MCF 10A (cell line): ENCODE measurements at regions of chr18 and their contacts with region 1.

Region 1: DNA sequence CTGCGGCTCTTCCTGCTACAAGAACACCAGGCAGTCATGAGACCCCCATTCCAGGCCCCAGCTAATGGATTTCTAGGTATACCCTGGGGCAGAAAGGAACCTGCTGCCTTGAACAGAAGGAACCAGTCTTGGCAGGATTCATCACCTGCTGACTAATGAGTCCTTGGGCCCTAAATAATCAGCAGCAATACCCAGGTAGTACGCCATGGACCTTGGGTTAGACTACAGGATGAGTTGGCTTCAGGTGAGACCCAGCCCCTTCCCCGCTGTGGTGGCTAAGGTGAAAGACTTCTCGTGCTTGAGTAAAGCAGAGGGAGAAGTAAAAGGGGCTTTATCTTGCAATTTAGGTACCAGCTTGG is 105.0 kb downstream of the SPIRE1 start:
- DNase-seq: peak; percentile 88
- H3K4me3 Mint-ChIP-seq: peak overlapping the region; percentile 12
- H3K27ac Mint-ChIP-seq: peak overlapping the region; percentile 89
- H3K4me1 Mint-ChIP-seq: peaks cover 40% of the 10 kb centered on the region
- H3K27me3 Mint-ChIP-seq: no peaks in the 10 kb centered on the region
- CTCF ChIP-seq: no peak

Region 2: GRCh38 chr18:12384261-12384660 is 168.6 kb before region 1 on chr18:
- CTCF ChIA-PET with region 1: no interaction called
- POLR2A ChIA-PET with region 1: no interaction called
- intact Hi-C with region 1: no loop called
- DNase-seq: no peak
- H3K4me3 Mint-ChIP-seq: no peak overlapping the region
- H3K27ac Mint-ChIP-seq: no peak overlapping the region
- H3K4me1 Mint-ChIP-seq: peaks cover 6% of the 10 kb centered on the region
- H3K27me3 Mint-ChIP-seq: no peaks in the 10 kb centered on the region
- CTCF ChIP-seq: no peak

Region 3: DNA sequence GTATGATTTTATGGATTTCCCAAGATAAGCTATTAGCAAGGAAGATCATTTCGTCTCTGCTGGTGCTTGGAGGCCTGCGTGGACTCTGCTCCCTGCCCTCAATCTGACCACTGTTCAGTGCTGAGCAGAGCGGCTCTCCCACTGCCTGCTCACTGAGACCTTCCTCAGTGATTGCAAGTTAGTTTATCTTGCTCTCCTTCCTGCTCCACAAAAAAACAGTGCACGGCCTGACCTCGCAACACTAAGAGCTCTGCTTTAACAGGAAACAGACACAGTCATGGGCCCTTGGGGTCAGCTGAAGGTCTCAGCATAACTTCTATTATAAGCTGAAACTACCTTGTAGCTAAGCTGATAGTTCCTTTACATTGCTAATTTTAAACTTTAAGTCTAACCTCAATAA is 92.0 kb before region 1 on chr18:
- CTCF ChIA-PET with region 1: no interaction called
- POLR2A ChIA-PET with region 1: no interaction called
- intact Hi-C with region 1: no loop called
- DNase-seq: no peak
- H3K4me3 Mint-ChIP-seq: no peak overlapping the region
- H3K27ac Mint-ChIP-seq: no peak overlapping the region
- H3K4me1 Mint-ChIP-seq: no peaks in the 10 kb centered on the region
- H3K27me3 Mint-ChIP-seq: no peaks in the 10 kb centered on the region
- CTCF ChIP-seq: no peak

Region 4: GRCh38 chr18:12585218-12585617 is 32.4 kb after region 1 on chr18:
- CTCF ChIA-PET with region 1: interaction called, 3 read pairs
- POLR2A ChIA-PET with region 1: interaction called, 16 read pairs
- intact Hi-C with region 1: no loop called
- DNase-seq: peak; percentile 19
- H3K4me3 Mint-ChIP-seq: no peak overlapping the region
- H3K27ac Mint-ChIP-seq: no peak overlapping the region
- H3K4me1 Mint-ChIP-seq: peaks cover 22% of the 10 kb centered on the region
- H3K27me3 Mint-ChIP-seq: no peaks in the 10 kb centered on the region
- CTCF ChIP-seq: no peak

Region 5: DNA sequence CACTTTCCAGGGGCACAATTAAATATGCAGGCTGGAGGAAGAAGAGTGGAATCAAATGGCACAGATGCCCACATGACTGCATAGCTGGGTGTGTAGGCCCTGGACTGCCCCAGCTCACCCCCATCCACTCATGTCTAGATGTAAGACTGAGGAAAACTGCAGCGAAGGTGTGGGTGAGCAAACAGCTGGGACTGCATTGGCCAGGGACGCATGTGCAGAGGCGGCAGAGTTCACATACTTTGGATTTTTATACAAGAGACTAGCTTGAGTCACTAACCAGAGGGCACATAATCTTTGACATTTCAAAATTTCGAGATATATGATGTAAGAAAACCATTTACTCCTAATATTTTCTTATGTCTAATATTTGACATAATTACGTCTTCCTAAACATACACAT is 44.9 kb after region 1 on chr18:
- CTCF ChIA-PET with region 1: no interaction called
- POLR2A ChIA-PET with region 1: interaction called, 10 read pairs
- intact Hi-C with region 1: loop called (anchors 2 kb)
- DNase-seq: peak; percentile 83
- H3K4me3 Mint-ChIP-seq: peak overlapping the region; percentile 3
- H3K27ac Mint-ChIP-seq: peak overlapping the region; percentile 84
- H3K4me1 Mint-ChIP-seq: peaks cover 36% of the 10 kb centered on the region
- H3K27me3 Mint-ChIP-seq: no peaks in the 10 kb centered on the region
- CTCF ChIP-seq: no peak

Region 6: GRCh38 chr18:12628706-12629702 is 76.1 kb after region 1 on chr18:
- CTCF ChIA-PET with region 1: no interaction called
- POLR2A ChIA-PET with region 1: interaction called, 10 read pairs
- intact Hi-C with region 1: no loop called
- DNase-seq: peak; percentile 52
- H3K4me3 Mint-ChIP-seq: no peak overlapping the region
- H3K27ac Mint-ChIP-seq: peak overlapping the region; percentile 71
- H3K4me1 Mint-ChIP-seq: peaks cover 26% of the 10 kb centered on the region
- H3K27me3 Mint-ChIP-seq: no peaks in the 10 kb centered on the region
- CTCF ChIP-seq: no peak

Region 7: DNA sequence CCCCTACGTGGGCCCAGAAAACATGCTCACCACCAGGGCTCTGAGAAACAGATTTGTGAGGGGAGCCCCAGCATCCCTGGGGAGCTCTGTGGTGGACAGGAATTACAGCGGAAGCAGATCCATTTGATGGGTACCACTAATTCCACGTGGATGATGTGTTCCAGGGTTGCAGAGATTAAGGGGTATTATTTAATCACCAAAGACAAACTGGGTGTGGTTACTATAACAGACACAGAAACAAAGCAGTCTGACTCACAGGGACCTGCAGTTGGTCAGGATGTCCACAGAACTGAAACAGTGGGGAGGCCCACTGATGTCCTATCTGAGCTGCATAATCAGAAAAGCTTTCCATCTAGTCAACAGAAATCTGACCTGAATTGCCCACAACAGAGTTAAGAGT is 215.8 kb after region 1 on chr18:
- CTCF ChIA-PET with region 1: no interaction called
- POLR2A ChIA-PET with region 1: no interaction called
- intact Hi-C with region 1: no loop called
- DNase-seq: peak; percentile 11
- H3K4me3 Mint-ChIP-seq: no peak overlapping the region
- H3K27ac Mint-ChIP-seq: no peak overlapping the region
- H3K4me1 Mint-ChIP-seq: peaks cover 6% of the 10 kb centered on the region
- H3K27me3 Mint-ChIP-seq: no peaks in the 10 kb centered on the region
- CTCF ChIP-seq: no peak